Activated CD8-positive, alpha-beta T cell treated with anti-CD3 and anti-CD28 coated beads for 36 hours (primary cell): ENCODE measurements at regions of chr12 and their contacts with region 1.

Region 1: GRCh38 chr12:8045952-8046944 is 13.7 kb downstream of the FOXJ2 start:
- DNase-seq: peak; percentile 92
- ATAC-seq: peak; percentile 82
- H3K4me3 Mint-ChIP-seq: no peak overlapping the region
- H3K27ac Mint-ChIP-seq: no peak overlapping the region
- H3K4me1 Mint-ChIP-seq: peaks cover 15% of the 10 kb centered on the region
- H3K27me3 Mint-ChIP-seq: no peaks in the 10 kb centered on the region
- CTCF ChIP-seq: peak; percentile 90

Region 2: GRCh38 chr12:8032242-8033152 is 13.8 kb before region 1 on chr12 and contains the start of gene FOXJ2:
- CTCF ChIA-PET with region 1: interaction called, 25 read pairs
- POLR2A ChIA-PET with region 1: interaction called, 4 read pairs
- intact Hi-C with region 1: no loop called
- DNase-seq: peak; percentile 73
- ATAC-seq: peak; percentile 90
- H3K4me3 Mint-ChIP-seq: peak within 1 kb of the TSS; percentile 87
- H3K27ac Mint-ChIP-seq: peak within 1 kb of the TSS; percentile 83
- H3K4me1 Mint-ChIP-seq: peaks cover 48% of the 10 kb centered on the region
- H3K27me3 Mint-ChIP-seq: no peaks in the 10 kb centered on the region
- CTCF ChIP-seq: no peak
- total RNA-seq, gene FOXJ2: 11.1 to 12.8 TPM

Region 3: DNA sequence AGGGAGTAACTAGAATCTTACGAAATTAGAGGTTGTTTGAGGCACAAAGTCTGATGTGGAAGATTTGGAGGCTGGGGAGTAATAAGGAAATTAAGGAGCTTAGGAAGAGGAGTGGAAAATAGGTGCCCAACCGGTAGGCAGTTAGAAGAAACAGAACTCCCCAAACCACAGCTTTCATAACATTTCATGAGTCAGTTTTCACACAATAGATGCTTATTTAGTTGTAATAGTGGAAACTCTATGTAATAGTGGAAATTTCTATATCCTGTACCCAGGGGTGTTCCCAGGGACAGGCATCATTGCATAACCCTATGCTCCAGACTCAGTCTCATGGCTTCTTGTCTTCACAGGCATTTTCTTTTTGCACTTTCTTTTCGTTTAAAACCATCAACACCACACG is 11.6 kb after region 1 on chr12:
- CTCF ChIA-PET with region 1: interaction called, 21 read pairs
- POLR2A ChIA-PET with region 1: no interaction called
- intact Hi-C with region 1: no loop called
- DNase-seq: no peak
- ATAC-seq: no peak
- H3K4me3 Mint-ChIP-seq: no peak overlapping the region
- H3K27ac Mint-ChIP-seq: no peak overlapping the region
- H3K4me1 Mint-ChIP-seq: peaks cover 19% of the 10 kb centered on the region
- H3K27me3 Mint-ChIP-seq: no peaks in the 10 kb centered on the region
- CTCF ChIP-seq: no peak

Region 4: DNA sequence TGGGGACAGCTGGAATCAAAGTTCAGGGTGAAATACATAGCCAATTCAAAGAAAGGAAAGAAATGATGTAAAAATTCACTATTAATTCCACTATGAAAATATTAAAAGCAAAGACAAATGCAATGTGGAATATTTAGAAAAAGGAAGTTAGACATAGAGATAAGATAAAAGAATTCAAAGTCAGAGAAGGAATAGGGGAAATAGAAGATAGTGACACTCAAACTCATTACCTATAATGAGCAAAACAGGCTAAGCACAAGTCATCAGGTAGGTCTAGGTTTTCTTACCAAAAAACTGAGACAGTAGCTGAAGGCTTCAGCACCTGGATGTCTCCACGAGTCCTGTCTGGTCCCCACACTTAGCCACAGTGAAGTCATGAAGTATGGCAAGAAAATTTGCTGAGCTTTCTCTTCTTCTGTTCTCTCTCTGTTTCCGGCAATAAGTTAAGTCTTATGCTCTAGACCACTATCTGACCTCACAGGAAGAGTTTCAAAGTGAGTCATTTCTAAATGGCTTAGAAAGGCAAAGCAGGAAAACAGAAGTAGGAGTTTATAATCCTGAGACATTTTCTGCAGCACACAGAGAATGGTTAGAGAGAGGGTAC is 19.8 kb after region 1 on chr12 and contains the start of gene C3AR1:
- CTCF ChIA-PET with region 1: interaction called, 22 read pairs
- POLR2A ChIA-PET with region 1: no interaction called
- intact Hi-C with region 1: no loop called
- DNase-seq: peak; percentile 46
- ATAC-seq: peak; percentile 99
- H3K4me3 Mint-ChIP-seq: peak within 1 kb of the TSS; percentile 50
- H3K27ac Mint-ChIP-seq: peak within 1 kb of the TSS; percentile 77
- H3K4me1 Mint-ChIP-seq: peaks cover 32% of the 10 kb centered on the region
- H3K27me3 Mint-ChIP-seq: no peaks in the 10 kb centered on the region
- CTCF ChIP-seq: no peak
- total RNA-seq, gene C3AR1: 1.1 to 1.4 TPM